ENCODE measurements at regions of chr10 and their contacts with region 1.

Region 1: GRCh38 chr10:27241652-27242472 is 1.3 kb upstream of the ACBD5 start:
- DNase-seq: peak; percentile 92 to 95 (median 93)
- H3K4me3 ChIP-seq: peak overlapping the region; percentile 76
- H3K27ac ChIP-seq: peak overlapping the region; percentile 95 to 98
- H3K4me1 ChIP-seq: peaks cover 6% of the 10 kb centered on the region
- H3K27me3 ChIP-seq: no peaks in the 10 kb centered on the region
- CTCF ChIP-seq: peak; percentile 38 to 75 (median 62)
- EP300 ChIP-seq: no peak
- POLR2A ChIP-seq: peak; percentile 94

Region 2: GRCh38 chr10:27155066-27155754 is 86.7 kb before region 1 on chr10 and contains the start of gene MASTL:
- intact Hi-C with region 1: loop called in 3 of 4 experiments (anchors 5 kb)
- DNase-seq: peak; percentile 90 to 95 (median 94)
- H3K4me3 ChIP-seq: peak within 1 kb of the TSS; percentile 70
- H3K27ac ChIP-seq: peak within 1 kb of the TSS; percentile 91 to 98
- H3K4me1 ChIP-seq: peaks cover 8% of the 10 kb centered on the region
- H3K27me3 ChIP-seq: no peaks in the 10 kb centered on the region
- CTCF ChIP-seq: peak in 1 of 3 donors; percentile 9
- EP300 ChIP-seq: peak; percentile 70
- POLR2A ChIP-seq: peak; percentile 95
- total RNA-seq, gene MASTL: 2.8 to 7.5 (median 5.2) TPM

Measured in ovary (tissue), 10 donors.